ENCODE measurements at regions of chr5 and their contacts with region 1.

Region 1: DNA sequence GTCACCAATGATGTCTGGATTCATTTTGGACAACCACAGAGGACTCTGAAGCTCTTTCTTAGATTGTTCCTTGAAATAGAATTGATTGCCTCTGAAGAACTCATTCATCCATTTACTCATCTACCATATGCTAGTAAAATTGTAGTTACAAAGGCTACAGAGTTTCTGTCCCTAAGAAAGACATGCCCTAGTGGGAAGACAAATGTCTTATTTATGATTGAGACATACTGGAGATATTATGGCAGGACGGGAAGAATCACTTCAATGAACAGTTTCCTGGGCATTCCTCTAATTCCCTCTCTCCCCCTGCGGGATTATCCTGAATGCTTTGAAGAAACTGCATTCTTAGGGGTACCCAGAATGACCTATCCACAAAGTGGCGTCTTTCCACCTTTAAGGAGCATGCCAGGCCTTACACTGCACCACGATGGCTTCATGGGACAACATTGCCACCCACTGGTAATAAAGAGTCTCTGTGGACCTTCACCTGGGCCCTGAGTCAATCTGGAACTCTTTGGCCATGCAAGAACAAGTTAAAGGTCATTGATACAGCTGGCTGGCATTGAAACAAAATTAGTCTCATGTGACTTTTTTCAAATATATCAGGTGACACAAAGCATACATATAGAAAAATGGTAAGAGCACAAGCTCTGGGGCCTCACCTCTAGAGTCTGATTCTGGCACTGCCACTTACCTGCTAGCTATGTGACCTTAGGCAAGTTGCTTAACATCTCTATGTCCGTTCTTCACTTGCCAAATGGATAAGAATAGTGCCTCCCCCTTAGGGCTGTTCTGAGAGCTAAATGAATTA is 32.1 kb downstream of the ANKRD55 start:
- DNase-seq: peak; percentile 39 to 86 (median 50)
- ATAC-seq: peak; percentile 95
- H3K4me3 ChIP-seq: no peak overlapping the region
- H3K4me3 Mint-ChIP-seq: no peak overlapping the region
- H3K27ac ChIP-seq: no peak overlapping the region
- H3K27ac Mint-ChIP-seq: peak overlapping the region; percentile 2
- H3K4me1 ChIP-seq: peaks cover 6% of the 10 kb centered on the region
- H3K4me1 Mint-ChIP-seq: peaks cover 34% of the 10 kb centered on the region
- H3K27me3 ChIP-seq: no peaks in the 10 kb centered on the region
- H3K27me3 Mint-ChIP-seq: no peaks in the 10 kb centered on the region
- CTCF ChIP-seq: peak; percentile 85

Region 2: DNA sequence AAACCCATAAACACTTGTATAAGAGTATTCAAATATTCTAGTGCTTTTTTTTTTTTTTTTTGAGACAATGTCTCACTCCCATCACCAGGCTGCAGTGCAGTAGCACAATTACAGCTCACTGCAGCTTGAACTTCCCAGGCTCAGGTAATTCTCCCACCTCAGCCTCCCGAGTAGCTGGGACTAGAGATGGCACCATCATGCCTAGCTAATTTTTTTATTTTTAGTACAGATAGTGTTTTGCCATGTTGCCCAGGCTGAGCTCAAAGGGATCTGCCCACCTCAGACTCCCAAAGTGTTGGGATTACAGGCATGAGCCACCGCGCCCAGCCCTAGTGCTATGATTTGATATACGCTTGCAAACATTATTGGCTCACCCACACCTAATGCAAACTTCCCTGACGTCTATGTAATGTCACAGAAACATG is 218.1 kb before region 1 on chr5:
- CTCF ChIA-PET with region 1: interaction called, 13 read pairs
- POLR2A ChIA-PET with region 1: interaction called, 9 read pairs
- intact Hi-C with region 1: loop called (anchors 1 to 2 kb)
- DNase-seq: peak in 7 of 14 experiments; percentile 18 to 71 (median 38)
- ATAC-seq: peak; percentile 44
- H3K4me3 ChIP-seq: peak overlapping the region; percentile 11
- H3K4me3 Mint-ChIP-seq: peak overlapping the region; percentile 72
- H3K27ac ChIP-seq: peak overlapping the region in 1 of 2 donors; percentile 10
- H3K27ac Mint-ChIP-seq: peak overlapping the region; percentile 94
- H3K4me1 ChIP-seq: peaks cover 31% of the 10 kb centered on the region
- H3K4me1 Mint-ChIP-seq: peaks cover 90% of the 10 kb centered on the region
- H3K27me3 ChIP-seq: no peaks in the 10 kb centered on the region
- H3K27me3 Mint-ChIP-seq: no peaks in the 10 kb centered on the region
- CTCF ChIP-seq: peak; percentile 66

Region 3: DNA sequence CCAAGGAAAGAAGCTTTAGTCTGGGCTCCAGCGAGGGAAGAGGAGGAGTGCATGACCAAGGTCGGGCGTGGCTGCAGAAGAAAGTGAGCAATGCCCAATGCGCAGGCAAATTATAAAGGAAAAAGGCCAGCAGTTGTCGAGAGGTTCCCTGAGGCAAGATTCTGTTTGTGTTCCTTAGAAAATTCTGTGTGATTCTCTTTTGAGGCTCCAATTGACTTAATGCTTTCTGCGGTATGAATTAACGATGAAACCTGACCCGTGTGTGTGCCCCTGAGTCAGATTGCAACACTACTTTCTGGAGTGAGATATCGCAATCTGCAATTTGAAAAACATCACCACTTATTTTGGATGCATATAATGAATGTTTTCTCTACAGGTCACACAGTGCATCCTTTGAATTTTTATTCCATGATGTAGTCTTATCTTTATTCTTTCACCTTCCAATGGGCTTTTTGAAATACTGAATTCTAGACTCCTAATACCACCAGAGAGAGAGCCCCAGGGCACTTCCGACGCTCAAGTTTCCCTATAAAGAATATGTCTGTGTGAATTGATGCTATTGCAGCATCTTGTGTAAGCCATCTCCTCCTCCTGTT is 88.4 kb before region 1 on chr5:
- CTCF ChIA-PET with region 1: no interaction called
- POLR2A ChIA-PET with region 1: no interaction called
- intact Hi-C with region 1: no loop called
- DNase-seq: no peak
- ATAC-seq: no peak
- H3K4me3 ChIP-seq: no peak overlapping the region
- H3K4me3 Mint-ChIP-seq: no peak overlapping the region
- H3K27ac ChIP-seq: no peak overlapping the region
- H3K27ac Mint-ChIP-seq: no peak overlapping the region
- H3K4me1 ChIP-seq: peaks cover 9% of the 10 kb centered on the region
- H3K4me1 Mint-ChIP-seq: peaks cover 30% of the 10 kb centered on the region
- H3K27me3 ChIP-seq: no peaks in the 10 kb centered on the region
- H3K27me3 Mint-ChIP-seq: no peaks in the 10 kb centered on the region
- CTCF ChIP-seq: no peak